ENCODE measurements at regions of chr2 and their contacts with region 1.

Region 1: GRCh38 chr2:130797493-130798435 is 39.0 kb upstream of the ARHGEF4 start:
- DNase-seq: peak; percentile 93
- H3K4me3 ChIP-seq: peak overlapping the region; percentile 66
- H3K27ac ChIP-seq: peak overlapping the region; percentile 45
- H3K4me1 ChIP-seq: no peaks in the 10 kb centered on the region
- H3K27me3 ChIP-seq: peaks cover 19% of the 10 kb centered on the region
- CTCF ChIP-seq: peak; percentile 78

Region 2: DNA sequence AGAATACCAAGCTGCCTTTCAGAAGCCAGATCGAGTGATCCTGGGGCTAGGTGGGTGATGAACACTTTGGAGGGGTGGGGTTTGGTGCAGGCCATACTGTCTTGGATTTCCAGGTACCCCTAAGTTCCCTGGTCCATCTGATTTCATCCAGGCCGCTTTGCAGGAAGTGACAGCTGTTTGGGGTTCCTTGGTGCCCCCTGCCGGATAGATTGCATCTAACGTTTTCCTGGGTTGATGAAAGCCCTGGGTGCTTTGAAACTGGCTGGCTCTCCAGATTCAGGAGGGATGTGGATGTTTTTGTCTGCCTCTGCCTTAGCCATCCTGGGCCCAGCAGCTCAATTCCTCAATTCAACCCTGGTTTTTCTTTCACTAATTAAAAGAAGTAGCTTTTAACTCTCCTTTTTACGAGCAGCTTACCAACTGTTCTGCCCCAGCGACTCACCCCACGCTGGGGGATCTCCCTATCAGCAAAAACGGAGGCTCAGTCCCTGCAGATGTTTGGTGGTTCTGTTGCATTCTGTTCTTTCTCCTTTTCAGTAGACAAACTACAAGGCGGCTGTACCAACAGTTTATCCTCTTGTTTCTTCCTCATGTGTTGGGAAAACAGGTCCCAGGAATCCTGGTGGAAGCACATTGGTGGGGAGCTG is 76.1 kb after region 1 on chr2:
- CTCF ChIA-PET with region 1: interaction called, 40 read pairs
- POLR2A ChIA-PET with region 1: no interaction called
- intact Hi-C with region 1: loop called (anchors 1 kb)
- DNase-seq: peak; percentile 68
- H3K4me3 ChIP-seq: no peak overlapping the region
- H3K27ac ChIP-seq: no peak overlapping the region
- H3K4me1 ChIP-seq: no peaks in the 10 kb centered on the region
- H3K27me3 ChIP-seq: no peaks in the 10 kb centered on the region
- CTCF ChIP-seq: peak; percentile 75

Region 3: DNA sequence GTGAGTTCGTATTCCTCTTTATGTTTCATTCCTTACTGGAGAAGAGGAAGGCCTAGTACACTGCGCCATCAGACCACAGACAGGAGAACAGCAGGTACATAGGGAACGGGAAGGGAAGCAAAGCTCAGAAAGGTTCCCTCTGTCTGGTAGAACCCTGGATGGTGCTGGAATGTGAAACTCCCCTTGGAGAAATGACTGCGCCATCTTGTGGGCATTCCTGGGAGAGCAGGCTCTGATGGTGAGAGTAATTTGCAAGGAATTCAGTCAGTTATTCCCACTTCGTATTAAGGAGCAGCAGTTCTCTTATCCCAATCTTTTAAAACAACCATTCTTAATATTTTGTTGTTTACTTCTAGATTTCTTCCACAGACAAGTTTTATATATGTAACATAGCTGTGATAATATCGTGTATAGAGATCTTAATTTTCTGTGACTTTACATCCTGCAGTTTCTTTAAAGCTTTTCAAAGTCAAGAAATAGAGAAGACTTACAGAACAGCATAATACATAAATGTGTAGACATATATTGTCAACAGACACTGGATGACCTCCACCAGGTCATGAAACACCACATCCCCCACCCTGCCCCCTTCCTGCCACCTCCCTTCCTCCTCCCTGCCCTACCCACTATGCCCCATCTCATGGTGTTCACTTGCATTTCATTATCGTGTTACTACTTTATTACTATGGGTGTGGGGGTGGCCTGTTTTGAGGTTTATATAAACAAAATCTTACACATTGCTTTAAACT is 122.8 kb after region 1 on chr2:
- CTCF ChIA-PET with region 1: interaction called, 3 read pairs
- POLR2A ChIA-PET with region 1: no interaction called
- intact Hi-C with region 1: loop called (anchors 1 kb)
- DNase-seq: peak; percentile 72
- H3K4me3 ChIP-seq: no peak overlapping the region
- H3K27ac ChIP-seq: no peak overlapping the region
- H3K4me1 ChIP-seq: no peaks in the 10 kb centered on the region
- H3K27me3 ChIP-seq: peaks cover 34% of the 10 kb centered on the region
- CTCF ChIP-seq: peak; percentile 91

Region 4: DNA sequence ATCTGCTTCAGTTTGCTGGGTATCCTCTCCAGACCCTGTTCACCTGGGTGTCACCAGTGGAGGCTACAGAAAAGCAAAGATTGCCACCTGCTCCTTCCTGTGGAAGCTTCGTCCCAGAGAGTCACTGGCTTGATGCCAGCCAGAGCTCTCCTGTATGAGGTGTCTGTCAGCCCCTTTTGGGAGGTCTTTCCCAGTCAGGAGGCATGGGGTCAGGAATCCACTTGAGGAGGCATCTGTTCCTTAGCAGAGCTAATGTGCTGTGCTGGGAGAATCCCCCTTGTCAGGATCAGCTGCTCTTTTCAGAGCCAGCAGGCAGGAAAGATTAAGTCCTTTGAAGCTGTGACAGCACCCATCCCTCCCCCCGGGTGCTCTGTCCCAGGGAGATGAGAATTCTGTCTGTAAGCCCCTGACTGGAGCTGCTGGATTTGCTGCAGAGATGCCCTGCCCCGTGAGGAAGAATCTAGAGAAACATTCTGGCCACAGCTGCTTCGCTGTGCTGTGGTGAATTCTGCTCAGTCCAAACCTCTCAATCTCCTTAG is 1740.6 kb after region 1 on chr2:
- CTCF ChIA-PET with region 1: no interaction called
- POLR2A ChIA-PET with region 1: no interaction called
- intact Hi-C with region 1: no loop called
- DNase-seq: no peak
- H3K4me3 ChIP-seq: no peak overlapping the region
- H3K27ac ChIP-seq: no peak overlapping the region
- H3K4me1 ChIP-seq: peaks cover 11% of the 10 kb centered on the region
- H3K27me3 ChIP-seq: no peaks in the 10 kb centered on the region
- CTCF ChIP-seq: no peak

Measured in A673 (cell line).